ENCODE measurements at regions of chr12 and their contacts with region 1.

Region 1: DNA sequence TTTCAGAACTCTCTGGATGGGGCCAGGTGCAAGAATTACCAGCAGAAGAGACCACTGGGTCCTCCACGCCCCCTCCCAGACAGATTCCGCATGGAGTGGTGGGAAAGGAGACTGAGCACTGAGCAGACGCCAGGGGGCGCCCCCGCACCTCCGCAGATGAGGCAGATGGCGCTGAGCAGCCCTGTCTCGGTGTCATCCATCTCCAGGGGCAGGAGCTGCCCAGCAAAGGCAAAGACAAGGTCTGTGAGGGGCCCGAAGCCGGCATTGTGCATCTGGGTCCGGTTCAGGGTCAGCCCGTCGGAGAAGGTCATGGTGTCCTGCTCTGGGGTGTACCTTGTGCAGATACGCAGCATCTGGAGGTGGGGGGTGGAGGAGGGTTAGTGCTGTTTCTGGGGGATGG is 6.3 kb upstream of the ITGB7 start:
- DNase-seq: peak; percentile 79 to 87 (median 83)
- ATAC-seq: peak; percentile 94
- H3K4me3 ChIP-seq: no peak overlapping the region
- H3K27ac ChIP-seq: no peak overlapping the region
- H3K4me1 ChIP-seq: peaks cover 20 to 38% of the 10 kb centered on the region in 2 experiments
- H3K27me3 ChIP-seq: no peaks in the 10 kb centered on the region
- CTCF ChIP-seq: peak; percentile 96 to 97 (median 97)
- EP300 ChIP-seq: no peak
- POLR2A ChIP-seq: no peak
- RAD21 ChIP-seq: peak; percentile 98 to 99

Region 2: GRCh38 chr12:53287741-53288216 is 74.4 kb after region 1 on chr12:
- CTCF ChIA-PET with region 1: interaction called, 41 read pairs
- POLR2A ChIA-PET with region 1: interaction called, 6 read pairs
- in situ Hi-C with region 1: loop called (anchors 5 kb)
- intact Hi-C with region 1: loop called (anchors 1 kb)
- DNase-seq: peak; percentile 67 to 78 (median 74)
- ATAC-seq: peak; percentile 96
- H3K4me3 ChIP-seq: no peak overlapping the region
- H3K27ac ChIP-seq: no peak overlapping the region
- H3K4me1 ChIP-seq: peaks cover 0 to 6% of the 10 kb centered on the region in 2 experiments; a peak in 1 of 5 replicates
- H3K27me3 ChIP-seq: no peaks in the 10 kb centered on the region
- CTCF ChIP-seq: peak; percentile 79 to 89 (median 83)
- EP300 ChIP-seq: no peak
- POLR2A ChIP-seq: no peak
- RAD21 ChIP-seq: peak; percentile 89 to 93

Region 3: DNA sequence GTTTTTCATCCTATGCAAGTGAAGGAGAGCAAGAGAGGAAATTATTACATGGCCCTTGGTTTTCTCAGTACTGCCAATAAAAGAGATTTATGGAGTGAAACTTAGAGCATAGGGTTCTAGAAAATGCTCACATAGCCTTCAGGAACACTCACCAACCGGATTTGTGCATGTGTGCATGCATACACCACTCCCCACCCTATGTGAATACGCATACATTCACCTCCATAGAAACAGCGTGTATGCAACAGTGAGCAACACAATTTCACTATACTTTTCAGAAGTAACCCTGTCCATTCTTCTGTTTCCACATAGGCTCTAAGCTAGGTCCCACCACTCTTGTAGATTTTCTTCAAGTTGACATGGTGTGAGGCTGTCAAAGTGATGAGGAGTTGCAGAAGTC is 693.8 kb after region 1 on chr12:
- CTCF ChIA-PET with region 1: no interaction called
- POLR2A ChIA-PET with region 1: no interaction called
- in situ Hi-C with region 1: no loop called
- intact Hi-C with region 1: no loop called
- DNase-seq: no peak
- ATAC-seq: no peak
- H3K4me3 ChIP-seq: no peak overlapping the region
- H3K27ac ChIP-seq: no peak overlapping the region
- H3K4me1 ChIP-seq: no peaks in the 10 kb centered on the region
- H3K27me3 ChIP-seq: peaks cover 4% of the 10 kb centered on the region in 2 experiments; a peak in 2 of 5 replicates
- CTCF ChIP-seq: no peak
- EP300 ChIP-seq: no peak
- POLR2A ChIP-seq: no peak
- RAD21 ChIP-seq: no peak